PC-3 (cell line): ENCODE measurements at regions of chr6 and their contacts with region 1.

Region 1: GRCh38 chr6:36633915-36634314 is 39.8 kb downstream of the SRSF3 start:
- DNase-seq: peak; percentile 67
- ATAC-seq: peak; percentile 89
- H3K4me3 ChIP-seq: no peak overlapping the region
- H3K27ac ChIP-seq: no peak overlapping the region
- H3K4me1 ChIP-seq: peaks cover 13% of the 10 kb centered on the region
- H3K27me3 ChIP-seq: no peaks in the 10 kb centered on the region
- CTCF ChIP-seq: no peak

Region 2: GRCh38 chr6:36459501-36459900 is 174.4 kb before region 1 on chr6:
- CTCF ChIA-PET with region 1: no interaction called
- POLR2A ChIA-PET with region 1: interaction called, 23 read pairs
- intact Hi-C with region 1: no loop called
- DNase-seq: no peak
- ATAC-seq: no peak
- H3K4me3 ChIP-seq: no peak overlapping the region
- H3K27ac ChIP-seq: no peak overlapping the region
- H3K4me1 ChIP-seq: no peaks in the 10 kb centered on the region
- H3K27me3 ChIP-seq: no peaks in the 10 kb centered on the region
- CTCF ChIP-seq: no peak

Region 3: GRCh38 chr6:36724514-36725390 is 90.8 kb after region 1 on chr6:
- CTCF ChIA-PET with region 1: no interaction called
- POLR2A ChIA-PET with region 1: no interaction called
- intact Hi-C with region 1: no loop called
- DNase-seq: peak; percentile 86
- ATAC-seq: peak; percentile 90
- H3K4me3 ChIP-seq: no peak overlapping the region
- H3K27ac ChIP-seq: no peak overlapping the region
- H3K4me1 ChIP-seq: no peaks in the 10 kb centered on the region
- H3K27me3 ChIP-seq: no peaks in the 10 kb centered on the region
- CTCF ChIP-seq: peak; percentile 77

Region 4: DNA sequence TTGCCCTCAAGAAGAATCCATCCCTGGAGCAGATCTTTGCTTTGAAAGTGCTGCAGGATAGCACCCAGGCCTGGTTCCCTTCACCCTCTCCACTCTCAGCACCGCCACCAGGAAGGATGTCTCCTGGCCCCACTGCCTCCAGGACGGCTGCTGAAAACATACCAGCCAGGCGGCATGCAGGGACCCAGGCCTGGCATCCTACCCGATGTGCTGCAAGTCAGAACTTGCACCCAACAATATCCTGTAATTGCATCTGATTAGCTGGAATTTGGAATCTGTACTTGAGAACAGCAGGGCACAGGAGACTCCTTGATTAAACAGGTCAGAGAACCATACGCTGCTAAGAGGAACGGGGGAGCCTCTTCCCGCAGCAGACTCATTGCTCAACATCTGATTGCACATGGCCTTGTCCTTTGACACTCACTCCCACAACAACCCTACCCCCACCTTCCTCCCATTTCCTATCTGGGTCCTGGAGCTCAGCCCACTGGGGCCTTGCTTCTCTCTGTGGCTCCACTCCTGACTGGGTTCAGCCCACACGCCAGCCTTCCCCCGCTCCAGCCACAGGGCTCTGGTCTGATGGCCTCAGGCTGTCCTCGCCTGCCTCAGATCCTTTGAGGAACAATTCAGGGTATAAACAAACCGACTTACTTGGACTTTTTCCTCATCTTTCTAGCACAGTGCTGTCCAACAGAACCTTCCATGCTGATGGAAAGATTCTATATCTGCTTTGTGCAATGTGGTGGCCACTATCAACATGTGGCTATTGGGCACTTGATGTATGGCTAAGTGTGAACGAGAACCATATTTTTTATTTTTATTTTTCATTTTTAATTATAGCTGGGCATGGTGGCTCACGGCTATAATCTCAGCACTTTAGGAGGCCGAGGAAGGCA is 449.6 kb after region 1 on chr6:
- CTCF ChIA-PET with region 1: no interaction called
- POLR2A ChIA-PET with region 1: no interaction called
- intact Hi-C with region 1: no loop called
- DNase-seq: no peak
- ATAC-seq: no peak
- H3K4me3 ChIP-seq: no peak overlapping the region
- H3K27ac ChIP-seq: no peak overlapping the region
- H3K4me1 ChIP-seq: no peaks in the 10 kb centered on the region
- H3K27me3 ChIP-seq: no peaks in the 10 kb centered on the region
- CTCF ChIP-seq: no peak